ENCODE measurements at regions of chr17 and their contacts with region 1.

Region 1: DNA sequence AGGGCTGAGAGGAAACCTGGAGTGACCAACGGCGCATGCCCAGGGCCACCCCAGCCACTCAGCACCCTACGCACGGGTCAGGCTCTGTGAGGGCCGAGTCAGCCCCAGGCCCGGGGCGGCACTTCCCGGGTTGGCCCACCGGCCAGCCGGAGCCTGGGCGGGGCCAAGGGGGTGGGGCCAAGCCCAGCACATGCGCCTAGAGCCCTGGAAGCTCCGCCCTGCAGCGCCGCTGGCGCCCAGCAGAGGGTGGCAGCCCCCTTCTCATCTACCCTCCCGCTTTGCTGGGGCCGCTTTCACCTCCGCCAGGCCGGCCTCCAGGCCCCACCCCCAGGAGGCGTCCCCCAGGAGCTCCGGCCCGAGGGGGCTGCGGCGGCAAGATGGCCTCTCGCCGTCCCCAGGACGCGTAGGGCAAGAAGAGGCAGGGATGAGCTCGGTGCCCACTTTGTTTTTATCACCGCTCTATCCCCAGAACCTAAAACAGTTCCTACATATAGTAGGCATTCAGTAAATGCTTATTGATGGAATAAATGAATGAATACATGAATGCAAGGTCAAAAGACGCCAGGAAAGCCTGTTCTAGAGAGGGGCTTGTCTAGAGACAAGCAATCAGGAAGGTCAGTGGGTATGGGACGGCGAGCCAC is 31.3 kb downstream of the MYO18A start:
- DNase-seq: peak; percentile 97
- ATAC-seq: peak; percentile 96

Region 2: GRCh38 chr17:29180034-29180787 is 31.3 kb after region 1 on chr17 and contains the start of gene MYO18A:
- intact Hi-C with region 1: loop called (anchors 5 kb)
- DNase-seq: peak; percentile 88
- ATAC-seq: peak; percentile 90
- total RNA-seq, gene MYO18A: 393 TPM

Region 3: GRCh38 chr17:29219378-29220047 is 70.6 kb after region 1 on chr17:
- intact Hi-C with region 1: loop called (anchors 2 kb)
- DNase-seq: peak; percentile 77
- ATAC-seq: peak; percentile 92

Region 4: DNA sequence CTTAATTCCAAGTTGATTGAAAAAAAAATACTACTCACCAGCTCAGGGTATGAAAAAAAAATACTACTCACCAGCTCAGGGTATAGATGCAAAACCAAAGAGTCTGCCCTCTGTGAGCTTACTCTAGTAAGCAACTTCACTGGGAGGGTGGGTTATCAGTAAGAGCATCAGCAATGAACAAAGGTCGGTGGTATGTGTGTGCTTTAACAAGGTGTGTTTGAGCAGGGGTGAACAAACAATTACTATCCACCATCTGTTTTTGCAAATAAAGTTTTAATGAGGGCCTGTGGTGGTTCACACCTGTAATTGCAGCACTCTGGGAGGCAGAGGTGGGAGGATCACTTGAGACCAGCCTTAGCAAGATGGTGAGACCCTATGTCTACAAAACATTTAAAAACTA is 125.0 kb after region 1 on chr17:
- intact Hi-C with region 1: no loop called
- DNase-seq: no peak
- ATAC-seq: no peak

Region 5: DNA sequence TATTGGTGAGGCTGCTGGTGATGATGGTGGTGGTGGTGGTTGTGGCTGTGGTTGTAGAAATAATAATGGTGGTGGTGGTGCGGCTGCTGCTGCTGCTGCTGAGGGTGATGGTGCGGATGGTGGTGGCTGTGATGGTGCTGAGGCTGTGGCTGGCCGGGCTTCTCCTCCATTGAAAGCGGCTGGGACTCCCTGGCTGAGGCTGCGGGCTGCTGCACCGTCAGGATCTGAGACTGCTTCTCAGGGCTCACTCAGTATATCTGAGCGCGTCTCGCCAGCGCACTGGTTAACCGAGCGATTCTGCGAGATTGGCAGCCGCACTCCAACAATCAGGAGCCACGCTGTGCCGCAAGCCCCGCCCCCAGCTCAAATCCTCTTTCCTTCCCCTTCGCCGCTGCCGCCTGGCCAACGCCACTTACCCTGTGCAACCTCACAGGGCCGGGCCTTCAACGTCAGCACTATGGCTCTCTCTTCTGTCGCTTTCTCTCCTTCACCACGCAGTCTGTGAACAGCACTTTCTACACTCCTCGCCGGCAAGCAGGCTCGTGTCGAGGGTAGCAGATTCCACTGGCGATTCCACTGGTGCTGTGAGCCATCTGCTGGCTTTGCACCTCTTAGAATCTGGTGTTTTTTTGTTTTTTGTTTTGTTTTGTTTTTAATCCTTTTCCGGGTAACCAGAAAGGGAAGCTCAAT is 145.1 kb after region 1 on chr17 and contains the start of gene NUFIP2:
- intact Hi-C with region 1: loop called (anchors 5 kb)
- DNase-seq: peak; percentile 100
- ATAC-seq: peak; percentile 93
- total RNA-seq, gene NUFIP2: 38.4 TPM